MCF 10A (cell line): ENCODE measurements at regions of chr2 and their contacts with region 1.

Region 1: GRCh38 chr2:85457877-85458316 is 39.4 kb downstream of the SH2D6 start:
- DNase-seq: peak; percentile 96
- H3K4me3 Mint-ChIP-seq: no peak overlapping the region
- H3K27ac Mint-ChIP-seq: peak overlapping the region; percentile 40
- H3K4me1 Mint-ChIP-seq: peaks cover 17% of the 10 kb centered on the region
- H3K27me3 Mint-ChIP-seq: no peaks in the 10 kb centered on the region
- CTCF ChIP-seq: no peak

Region 2: DNA sequence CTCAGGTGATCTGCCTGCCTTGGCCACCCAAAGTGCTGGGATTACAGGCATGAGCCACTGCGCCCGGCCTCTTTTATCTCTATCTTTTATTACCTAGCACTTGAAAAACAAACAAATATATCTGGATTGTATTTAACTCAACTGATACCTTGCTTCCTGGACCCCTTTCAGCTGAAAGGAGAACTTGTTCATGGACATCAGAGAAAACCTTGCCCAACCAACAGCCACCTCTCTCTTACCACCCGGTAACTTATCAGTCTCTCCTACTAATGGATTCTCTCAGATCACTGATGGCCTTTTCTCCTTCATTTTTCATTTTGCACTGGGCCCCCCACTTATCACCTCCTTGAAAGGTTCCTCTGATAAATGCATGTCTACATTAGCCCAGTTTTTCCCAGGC is 110.3 kb before region 1 on chr2:
- CTCF ChIA-PET with region 1: no interaction called
- POLR2A ChIA-PET with region 1: no interaction called
- intact Hi-C with region 1: no loop called
- DNase-seq: no peak
- H3K4me3 Mint-ChIP-seq: no peak overlapping the region
- H3K27ac Mint-ChIP-seq: peak overlapping the region; percentile 64
- H3K4me1 Mint-ChIP-seq: no peaks in the 10 kb centered on the region
- H3K27me3 Mint-ChIP-seq: no peaks in the 10 kb centered on the region
- CTCF ChIP-seq: no peak

Region 3: GRCh38 chr2:85445316-85446295 is 12.3 kb before region 1 on chr2:
- CTCF ChIA-PET with region 1: interaction called, 7 read pairs
- POLR2A ChIA-PET with region 1: interaction called, 21 read pairs
- intact Hi-C with region 1: no loop called
- DNase-seq: peak; percentile 90
- H3K4me3 Mint-ChIP-seq: no peak overlapping the region
- H3K27ac Mint-ChIP-seq: peak overlapping the region; percentile 83
- H3K4me1 Mint-ChIP-seq: peaks cover 18% of the 10 kb centered on the region
- H3K27me3 Mint-ChIP-seq: no peaks in the 10 kb centered on the region
- CTCF ChIP-seq: no peak

Region 4: GRCh38 chr2:85468704-85469349 is 10.9 kb after region 1 on chr2:
- CTCF ChIA-PET with region 1: interaction called, 8 read pairs
- POLR2A ChIA-PET with region 1: interaction called, 23 read pairs
- intact Hi-C with region 1: no loop called
- DNase-seq: peak; percentile 87
- H3K4me3 Mint-ChIP-seq: no peak overlapping the region
- H3K27ac Mint-ChIP-seq: no peak overlapping the region
- H3K4me1 Mint-ChIP-seq: peaks cover 29% of the 10 kb centered on the region
- H3K27me3 Mint-ChIP-seq: no peaks in the 10 kb centered on the region
- CTCF ChIP-seq: no peak

Region 5: DNA sequence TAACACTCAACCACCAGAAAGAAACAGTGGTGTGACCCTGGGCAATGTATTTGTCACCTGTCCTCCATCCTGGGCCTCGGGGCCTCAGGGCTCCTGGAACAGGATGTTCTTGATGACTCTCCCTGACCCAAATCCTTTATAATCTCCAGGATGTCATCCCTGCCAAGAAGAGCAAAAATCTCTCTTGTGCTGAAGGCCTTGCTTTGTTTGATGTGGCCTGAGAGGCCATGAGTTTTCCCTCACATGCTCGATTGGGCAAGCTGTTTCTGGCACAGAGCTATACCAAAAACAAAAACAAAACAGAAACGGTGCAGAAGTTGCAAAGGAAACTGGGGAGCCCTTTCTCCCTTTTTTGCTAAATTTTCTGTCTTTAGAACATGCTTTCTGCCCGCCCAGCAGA is 466.6 kb after region 1 on chr2:
- CTCF ChIA-PET with region 1: no interaction called
- POLR2A ChIA-PET with region 1: no interaction called
- intact Hi-C with region 1: no loop called
- DNase-seq: peak; percentile 92
- H3K4me3 Mint-ChIP-seq: peak overlapping the region; percentile 22
- H3K27ac Mint-ChIP-seq: peak overlapping the region; percentile 1
- H3K4me1 Mint-ChIP-seq: peaks cover 41% of the 10 kb centered on the region
- H3K27me3 Mint-ChIP-seq: no peaks in the 10 kb centered on the region
- CTCF ChIP-seq: no peak